ENCODE measurements at regions of chr4 and their contacts with region 1.

Region 1: DNA sequence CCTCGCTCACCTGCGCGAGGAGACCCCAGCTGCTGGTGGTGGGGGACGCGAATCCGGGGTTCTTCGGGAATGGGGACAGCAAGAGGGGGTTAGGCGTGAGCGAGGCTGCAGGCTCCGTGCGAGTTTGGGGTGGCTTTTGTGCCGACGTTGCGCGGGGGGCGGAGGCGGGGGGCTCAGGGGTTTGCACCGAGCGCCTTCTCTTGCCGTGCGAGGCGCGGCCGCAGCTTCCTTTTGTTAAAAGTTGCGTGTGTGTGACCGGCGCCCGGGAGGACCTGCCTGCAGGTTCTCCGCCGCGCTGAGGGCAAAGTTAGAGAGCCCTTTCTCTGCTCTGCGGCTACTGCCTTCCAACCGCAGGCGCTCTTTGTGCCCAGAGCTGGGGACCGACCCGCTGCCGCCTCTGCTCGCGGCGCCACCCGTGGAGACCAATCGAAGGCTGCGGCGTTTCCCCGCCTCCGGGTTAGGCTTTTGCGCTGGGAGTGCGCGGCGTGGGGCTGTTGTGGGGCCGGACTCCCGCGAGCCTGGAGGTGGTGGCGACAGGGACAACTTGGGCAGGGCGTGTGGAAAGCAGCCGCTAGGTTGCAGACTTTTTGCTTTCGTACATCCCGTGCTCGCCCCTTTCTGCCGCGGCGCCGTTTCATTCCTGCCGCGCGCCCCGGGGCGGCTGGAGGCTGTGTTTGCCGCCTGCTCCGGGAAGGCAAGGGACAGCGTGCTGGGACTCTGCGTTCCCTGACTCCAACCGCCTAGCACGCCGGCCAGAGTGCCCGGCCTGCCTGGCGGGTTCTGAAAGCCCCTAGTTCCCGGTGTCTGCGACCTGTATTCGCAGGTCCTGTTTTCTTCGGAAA is 716 bp downstream of the KIT start:
- DNase-seq: no peak
- H3K4me3 Mint-ChIP-seq: peak overlapping the region; percentile 71
- H3K27ac Mint-ChIP-seq: peak overlapping the region; percentile 14
- H3K4me1 Mint-ChIP-seq: peaks cover 6% of the 10 kb centered on the region
- H3K27me3 Mint-ChIP-seq: peaks cover 69% of the 10 kb centered on the region

Region 2: DNA sequence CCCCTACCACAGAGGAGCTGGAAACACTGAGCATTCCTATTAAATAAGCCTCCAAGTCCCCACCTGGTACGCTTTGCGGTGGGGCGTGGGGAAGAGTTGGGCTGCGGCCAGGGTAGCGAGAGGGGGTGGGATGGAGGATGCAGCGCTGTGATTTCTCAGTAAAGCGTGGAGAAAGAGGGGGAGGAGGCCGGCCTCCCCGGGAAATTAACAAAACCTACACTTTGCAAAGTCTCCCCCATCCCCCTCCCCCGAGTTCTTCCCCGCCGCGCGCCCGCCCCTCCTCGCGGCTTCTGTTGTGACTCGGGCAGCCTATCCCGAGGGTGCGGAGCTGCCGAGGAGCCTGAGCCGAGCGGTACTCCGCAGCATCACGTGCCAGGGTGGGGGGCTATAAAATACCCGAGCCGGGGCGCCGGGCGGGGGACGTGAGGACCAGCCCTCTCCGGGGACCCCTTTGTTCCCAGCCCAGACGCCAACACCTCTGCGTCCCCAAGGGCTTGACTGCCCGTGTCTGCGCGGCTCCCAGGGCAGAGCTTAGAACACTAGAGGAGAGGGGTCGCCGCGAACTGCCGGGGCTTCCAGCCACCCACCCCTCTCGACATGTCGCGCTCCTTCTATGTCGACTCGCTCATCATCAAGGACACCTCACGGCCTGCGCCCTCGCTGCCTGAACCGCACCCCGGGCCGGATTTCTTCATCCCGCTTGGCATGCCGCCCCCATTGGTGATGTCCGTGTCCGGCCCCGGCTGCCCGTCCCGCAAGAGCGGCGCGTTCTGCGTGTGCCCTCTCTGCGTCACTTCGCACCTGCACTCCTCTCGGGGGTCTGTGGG is 558.5 kb before region 1 on chr4 and contains the start of gene GSX2:
- intact Hi-C with region 1: loop called (anchors 10 kb)
- DNase-seq: no peak
- H3K4me3 Mint-ChIP-seq: peak within 1 kb of the TSS; percentile 62
- H3K27ac Mint-ChIP-seq: no peak within 1 kb of the TSS
- H3K4me1 Mint-ChIP-seq: peaks cover 34% of the 10 kb centered on the region
- H3K27me3 Mint-ChIP-seq: peaks cover 88% of the 10 kb centered on the region
- total RNA-seq, gene GSX2: not detected in 2 replicates

Region 3: GRCh38 chr4:54228056-54228527 is 430.4 kb before region 1 on chr4:
- intact Hi-C with region 1: loop called (anchors 5 kb)
- DNase-seq: no peak
- H3K4me3 Mint-ChIP-seq: peak overlapping the region; percentile 47
- H3K27ac Mint-ChIP-seq: peak overlapping the region; percentile 75
- H3K4me1 Mint-ChIP-seq: peaks cover 6% of the 10 kb centered on the region
- H3K27me3 Mint-ChIP-seq: peaks cover 80% of the 10 kb centered on the region

Region 4: DNA sequence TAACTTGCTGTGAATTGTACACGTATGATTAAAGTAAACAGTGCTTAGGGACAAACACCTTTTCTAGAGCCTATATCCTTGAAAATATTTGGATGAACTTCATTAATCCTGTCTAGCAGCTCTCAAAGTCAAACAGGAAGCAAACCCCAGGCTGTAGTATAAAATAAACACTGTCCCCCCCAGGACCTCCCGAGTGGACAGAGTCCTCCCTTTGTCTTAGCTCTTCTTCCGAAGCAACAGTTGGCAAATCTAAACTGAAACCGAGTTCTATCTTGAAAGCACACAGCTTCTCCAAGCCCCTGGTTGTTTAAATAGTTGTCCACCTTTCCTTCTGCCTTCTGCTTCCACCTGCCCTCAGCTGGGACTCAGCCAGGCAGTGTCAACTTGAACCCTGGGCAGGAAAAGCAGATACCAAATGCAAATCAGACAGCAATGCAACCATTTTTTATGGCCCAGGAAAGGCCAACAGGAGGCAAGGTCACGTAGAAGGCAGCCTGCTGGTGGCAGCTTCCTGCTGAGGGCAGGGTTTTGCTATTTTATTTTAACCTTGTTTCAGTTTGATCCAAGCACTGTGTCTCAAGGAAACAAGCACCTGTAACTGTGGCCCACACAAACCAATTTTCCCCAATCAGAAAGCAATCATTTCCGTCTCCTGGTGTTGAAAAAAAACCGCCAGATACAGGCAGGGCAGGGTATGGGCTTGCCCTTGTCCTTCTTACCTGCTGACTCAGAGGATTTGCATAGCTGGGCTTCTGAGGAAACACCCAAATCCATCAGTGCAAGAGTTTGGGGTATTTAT is 111.0 kb before region 1 on chr4:
- intact Hi-C with region 1: loop called (anchors 5 kb)
- DNase-seq: no peak
- H3K4me3 Mint-ChIP-seq: peak overlapping the region; percentile 20
- H3K27ac Mint-ChIP-seq: peak overlapping the region; percentile 90
- H3K4me1 Mint-ChIP-seq: peaks cover 9% of the 10 kb centered on the region
- H3K27me3 Mint-ChIP-seq: peaks cover 2% of the 10 kb centered on the region

Region 5: GRCh38 chr4:54683616-54684346 is 25.3 kb after region 1 on chr4:
- intact Hi-C with region 1: loop called (anchors 1 kb)
- DNase-seq: peak; percentile 15
- H3K4me3 Mint-ChIP-seq: no peak overlapping the region
- H3K27ac Mint-ChIP-seq: no peak overlapping the region
- H3K4me1 Mint-ChIP-seq: peaks cover 6% of the 10 kb centered on the region
- H3K27me3 Mint-ChIP-seq: no peaks in the 10 kb centered on the region